ENCODE measurements at regions of chr3 and their contacts with region 1.

Region 1: GRCh38 chr3:63961891-63962290 is 49.7 kb upstream of the SCAANT1 start:
- DNase-seq: no peak
- ATAC-seq: peak; percentile 86
- H3K4me3 Mint-ChIP-seq: no peak overlapping the region
- H3K27ac Mint-ChIP-seq: no peak overlapping the region
- H3K4me1 Mint-ChIP-seq: peaks cover 40% of the 10 kb centered on the region
- H3K27me3 Mint-ChIP-seq: no peaks in the 10 kb centered on the region
- CTCF ChIP-seq: no peak

Region 2: GRCh38 chr3:63927422-63928280 is 34.2 kb before region 1 on chr3:
- CTCF ChIA-PET with region 1: interaction called, 5 read pairs
- POLR2A ChIA-PET with region 1: interaction called, 3 read pairs
- intact Hi-C with region 1: loop called (anchors 1 kb)
- DNase-seq: no peak
- ATAC-seq: peak; percentile 89
- H3K4me3 Mint-ChIP-seq: peak overlapping the region; percentile 71
- H3K27ac Mint-ChIP-seq: peak overlapping the region; percentile 95
- H3K4me1 Mint-ChIP-seq: peaks cover 86% of the 10 kb centered on the region
- H3K27me3 Mint-ChIP-seq: no peaks in the 10 kb centered on the region
- CTCF ChIP-seq: no peak

Region 3: GRCh38 chr3:63975723-63976122 is 13.8 kb after region 1 on chr3:
- CTCF ChIA-PET with region 1: interaction called, 11 read pairs
- POLR2A ChIA-PET with region 1: no interaction called
- intact Hi-C with region 1: no loop called
- DNase-seq: no peak
- ATAC-seq: no peak
- H3K4me3 Mint-ChIP-seq: no peak overlapping the region
- H3K27ac Mint-ChIP-seq: no peak overlapping the region
- H3K4me1 Mint-ChIP-seq: peaks cover 23% of the 10 kb centered on the region
- H3K27me3 Mint-ChIP-seq: no peaks in the 10 kb centered on the region
- CTCF ChIP-seq: no peak